Activated CD4-positive, alpha-beta T cell treated with anti-CD3 and anti-CD28 coated beads, Interleukin-2, amount 10 ng/mL, durations not matched to agents 7 days and 5 days (primary cell): ENCODE measurements at regions of chr10 and their contacts with region 1.

Region 1: DNA sequence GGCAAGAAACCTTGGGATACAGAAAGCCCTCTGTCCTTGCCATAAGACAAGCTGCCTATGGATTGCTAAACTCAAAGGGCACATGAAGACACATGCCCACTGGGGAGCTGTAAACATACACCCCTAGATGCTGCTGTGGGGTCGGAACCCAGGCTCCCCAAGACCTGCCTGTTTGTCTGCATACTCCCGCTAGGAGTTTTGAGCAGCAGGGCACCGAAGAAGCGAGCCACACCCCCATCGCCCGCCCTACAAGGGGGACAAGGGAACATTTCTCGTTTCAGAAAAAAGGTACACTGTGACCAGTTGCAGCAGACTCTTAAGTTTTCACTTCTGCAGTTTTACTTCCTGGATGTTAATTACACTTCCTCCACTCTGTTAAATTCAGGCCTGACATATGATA is 680.2 kb upstream of the GHITM start:
- DNase-seq: no peak
- H3K4me3 Mint-ChIP-seq: no peak overlapping the region
- H3K27ac Mint-ChIP-seq: no peak overlapping the region
- H3K4me1 Mint-ChIP-seq: no peaks in the 10 kb centered on the region
- H3K27me3 Mint-ChIP-seq: no peaks in the 10 kb centered on the region

Region 2: GRCh38 chr10:83333566-83333965 is 125.6 kb before region 1 on chr10:
- CTCF ChIA-PET with region 1: no interaction called
- POLR2A ChIA-PET with region 1: no interaction called
- DNase-seq: no peak
- H3K4me3 Mint-ChIP-seq: no peak overlapping the region
- H3K27ac Mint-ChIP-seq: no peak overlapping the region
- H3K4me1 Mint-ChIP-seq: no peaks in the 10 kb centered on the region
- H3K27me3 Mint-ChIP-seq: no peaks in the 10 kb centered on the region

Region 3: DNA sequence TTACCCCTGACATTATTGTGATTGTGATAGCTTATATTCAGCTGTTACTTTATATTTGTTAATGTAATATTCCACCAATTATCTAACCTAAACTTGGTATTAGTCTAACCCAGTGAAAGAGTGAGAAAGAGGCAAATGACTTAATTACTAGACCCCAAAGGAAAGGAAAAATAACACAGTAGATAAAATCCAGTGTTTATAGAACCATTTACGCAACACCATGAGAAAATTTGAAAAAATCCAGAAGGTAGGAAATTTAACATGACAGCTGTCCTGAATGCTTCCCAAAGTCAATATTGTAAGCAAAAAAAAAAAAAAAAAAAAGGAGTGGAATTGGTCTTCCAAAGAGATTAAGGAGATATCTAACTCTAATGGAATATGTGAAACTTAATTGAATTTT is 61.3 kb before region 1 on chr10:
- CTCF ChIA-PET with region 1: no interaction called
- POLR2A ChIA-PET with region 1: no interaction called
- DNase-seq: no peak
- H3K4me3 Mint-ChIP-seq: no peak overlapping the region
- H3K27ac Mint-ChIP-seq: no peak overlapping the region
- H3K4me1 Mint-ChIP-seq: no peaks in the 10 kb centered on the region
- H3K27me3 Mint-ChIP-seq: no peaks in the 10 kb centered on the region

Region 4: DNA sequence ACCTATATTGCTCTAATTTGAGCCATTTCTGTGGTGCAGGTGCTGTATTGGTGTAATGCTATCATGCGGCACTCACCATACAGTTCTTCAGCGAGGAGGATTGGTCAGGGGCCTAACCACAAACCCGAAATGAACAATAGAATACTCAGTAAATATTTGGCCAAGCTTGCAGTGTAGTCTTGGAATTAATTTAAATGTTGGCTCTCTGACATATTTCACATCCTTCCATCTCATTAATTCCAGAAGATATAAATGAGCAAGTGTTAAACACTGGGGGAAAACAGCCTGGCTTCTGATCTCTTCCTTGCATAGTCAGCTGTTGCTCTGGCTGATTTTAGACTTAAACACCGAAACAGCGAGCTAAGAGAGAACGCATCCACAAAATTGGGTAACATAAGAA is 17.1 kb after region 1 on chr10:
- CTCF ChIA-PET with region 1: no interaction called
- POLR2A ChIA-PET with region 1: interaction called, 15 read pairs
- DNase-seq: no peak
- H3K4me3 Mint-ChIP-seq: no peak overlapping the region
- H3K27ac Mint-ChIP-seq: no peak overlapping the region
- H3K4me1 Mint-ChIP-seq: no peaks in the 10 kb centered on the region
- H3K27me3 Mint-ChIP-seq: no peaks in the 10 kb centered on the region